Prostate gland (tissue), 2 donors: ENCODE measurements at regions of chr20 and their contacts with region 1.

Region 1: GRCh38 chr20:8043687-8044282 is 24.2 kb upstream of the TMX4 start:
- DNase-seq: peak; percentile 60
- H3K4me3 ChIP-seq: no peak overlapping the region
- H3K27ac ChIP-seq: no peak overlapping the region
- H3K4me1 ChIP-seq: no peaks in the 10 kb centered on the region
- H3K27me3 ChIP-seq: no peaks in the 10 kb centered on the region
- CTCF ChIP-seq: peak; percentile 50 to 86 (median 76)
- POLR2A ChIP-seq: no peak

Region 2: GRCh38 chr20:7437311-7437710 is 606.5 kb before region 1 on chr20:
- intact Hi-C with region 1: no loop called
- DNase-seq: no peak
- H3K4me3 ChIP-seq: no peak overlapping the region
- H3K27ac ChIP-seq: no peak overlapping the region
- H3K4me1 ChIP-seq: no peaks in the 10 kb centered on the region
- H3K27me3 ChIP-seq: no peaks in the 10 kb centered on the region
- CTCF ChIP-seq: no peak
- POLR2A ChIP-seq: no peak

Region 3: GRCh38 chr20:8194721-8195120 is 150.9 kb after region 1 on chr20:
- intact Hi-C with region 1: no loop called
- DNase-seq: no peak
- H3K4me3 ChIP-seq: no peak overlapping the region
- H3K27ac ChIP-seq: no peak overlapping the region
- H3K4me1 ChIP-seq: no peaks in the 10 kb centered on the region
- H3K27me3 ChIP-seq: no peaks in the 10 kb centered on the region
- CTCF ChIP-seq: no peak
- POLR2A ChIP-seq: no peak

Region 4: GRCh38 chr20:8389381-8390036 is 345.7 kb after region 1 on chr20:
- intact Hi-C with region 1: loop called (anchors 5 kb)
- DNase-seq: no peak
- H3K4me3 ChIP-seq: no peak overlapping the region
- H3K27ac ChIP-seq: no peak overlapping the region
- H3K4me1 ChIP-seq: no peaks in the 10 kb centered on the region
- H3K27me3 ChIP-seq: no peaks in the 10 kb centered on the region
- CTCF ChIP-seq: peak; percentile 47 to 78 (median 68)
- POLR2A ChIP-seq: no peak

Region 5: DNA sequence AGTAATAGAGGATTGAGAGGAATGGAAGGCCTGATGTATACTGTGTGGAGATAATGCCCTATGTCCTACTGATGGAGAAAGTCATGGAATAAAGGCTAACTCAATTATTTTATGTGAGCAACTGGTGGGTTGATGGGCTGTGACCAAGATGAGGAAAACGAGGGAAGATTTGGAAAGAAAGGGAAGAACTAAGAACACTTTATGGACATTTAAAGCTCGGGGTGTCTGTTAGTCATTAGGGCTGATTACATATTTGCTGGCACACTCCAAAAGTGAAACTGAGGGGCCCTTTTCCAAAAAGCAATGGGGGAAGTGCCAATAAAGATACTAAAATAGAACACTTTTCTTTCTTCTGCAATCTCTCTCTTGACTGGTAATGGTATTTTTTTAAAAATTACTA is 527.8 kb after region 1 on chr20:
- intact Hi-C with region 1: no loop called
- DNase-seq: no peak
- H3K4me3 ChIP-seq: no peak overlapping the region
- H3K27ac ChIP-seq: no peak overlapping the region
- H3K4me1 ChIP-seq: no peaks in the 10 kb centered on the region
- H3K27me3 ChIP-seq: no peaks in the 10 kb centered on the region
- CTCF ChIP-seq: no peak
- POLR2A ChIP-seq: no peak